ENCODE measurements at regions of chr2 and their contacts with region 1.

Region 1: GRCh38 chr2:231227309-231228162 is 29.1 kb downstream of the ARMC9 start:
- DNase-seq: peak; percentile 90
- H3K27ac ChIP-seq: no peak overlapping the region
- CTCF ChIP-seq: peak; percentile 80

Region 2: DNA sequence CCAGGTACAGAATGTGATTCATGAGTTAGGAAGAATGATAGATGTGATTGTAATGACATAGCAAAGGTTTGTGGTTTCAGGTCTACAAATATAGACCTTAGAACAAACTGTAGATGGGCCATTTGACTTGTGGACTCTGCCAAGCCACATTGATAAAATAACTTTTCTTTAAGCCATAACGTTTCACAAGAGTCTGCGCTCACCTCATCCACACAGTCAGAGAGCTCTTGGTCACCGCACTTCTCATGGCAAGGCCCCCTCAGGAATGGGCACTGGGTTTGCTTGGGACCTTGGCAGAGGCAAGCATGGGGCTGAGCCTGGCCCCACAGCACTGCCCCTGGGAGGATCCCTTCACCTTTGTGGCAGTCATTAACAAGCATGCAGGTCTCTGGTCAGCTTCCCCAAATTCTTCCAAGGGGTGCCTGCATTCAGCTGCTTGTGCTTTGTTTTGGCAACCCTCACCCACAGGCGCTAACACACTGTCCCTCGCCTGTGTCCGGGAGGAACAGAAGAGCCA is 15.1 kb before region 1 on chr2:
- CTCF ChIA-PET with region 1: interaction called, 10 read pairs
- POLR2A ChIA-PET with region 1: no interaction called
- DNase-seq: no peak
- H3K27ac ChIP-seq: no peak overlapping the region
- CTCF ChIP-seq: no peak

Region 3: GRCh38 chr2:231280846-231281245 is 53.3 kb after region 1 on chr2:
- CTCF ChIA-PET with region 1: no interaction called
- POLR2A ChIA-PET with region 1: no interaction called
- DNase-seq: no peak
- H3K27ac ChIP-seq: no peak overlapping the region
- CTCF ChIP-seq: no peak

Region 4: DNA sequence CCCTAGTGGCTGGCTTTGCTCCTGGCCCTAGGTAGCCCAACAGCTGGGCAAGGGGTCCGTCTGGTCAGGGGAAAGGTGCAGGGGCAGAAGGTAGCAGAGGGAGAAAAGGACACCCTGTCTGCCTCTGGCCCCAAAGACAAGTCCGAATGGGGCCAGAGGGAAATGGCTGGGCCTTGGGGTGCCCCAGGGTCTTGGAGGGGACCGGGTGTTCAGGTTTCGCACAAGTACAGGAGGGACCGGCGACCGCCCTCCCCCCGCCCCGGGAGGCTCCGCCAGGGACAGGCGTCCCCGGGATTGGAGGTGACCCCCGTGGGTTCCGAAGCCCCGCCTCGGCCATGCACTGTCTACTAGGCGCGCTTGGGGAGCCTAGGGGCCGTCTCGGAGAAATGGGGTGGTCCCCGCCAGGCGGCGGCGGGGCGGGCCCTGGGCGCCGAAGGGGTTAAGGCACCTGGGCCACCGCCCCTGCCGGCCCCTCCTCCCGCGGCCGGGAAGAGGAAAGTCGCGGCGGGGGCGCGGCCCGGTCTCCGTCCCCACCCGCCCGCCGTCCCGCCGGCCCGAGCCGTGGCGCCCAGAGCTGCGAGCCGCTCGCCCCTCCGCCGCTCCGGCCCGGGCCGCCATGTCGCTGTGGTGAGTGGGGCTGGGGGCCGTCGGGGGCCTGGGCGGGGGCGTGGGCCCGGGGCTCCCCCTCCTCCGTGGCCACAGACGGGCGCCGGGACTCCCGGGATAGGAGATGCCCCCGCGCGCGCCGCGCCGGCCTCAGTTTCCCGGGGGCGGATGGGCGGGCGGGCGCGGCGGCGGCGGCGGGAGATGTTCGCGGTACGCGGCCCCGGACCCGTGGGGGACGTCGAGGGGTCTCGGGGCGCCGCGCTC is 167.9 kb after region 1 on chr2 and contains the start of gene B3GNT7:
- CTCF ChIA-PET with region 1: interaction called, 11 read pairs
- POLR2A ChIA-PET with region 1: no interaction called
- DNase-seq: no peak
- H3K27ac ChIP-seq: no peak within 1 kb of the TSS
- CTCF ChIP-seq: no peak

Region 5: DNA sequence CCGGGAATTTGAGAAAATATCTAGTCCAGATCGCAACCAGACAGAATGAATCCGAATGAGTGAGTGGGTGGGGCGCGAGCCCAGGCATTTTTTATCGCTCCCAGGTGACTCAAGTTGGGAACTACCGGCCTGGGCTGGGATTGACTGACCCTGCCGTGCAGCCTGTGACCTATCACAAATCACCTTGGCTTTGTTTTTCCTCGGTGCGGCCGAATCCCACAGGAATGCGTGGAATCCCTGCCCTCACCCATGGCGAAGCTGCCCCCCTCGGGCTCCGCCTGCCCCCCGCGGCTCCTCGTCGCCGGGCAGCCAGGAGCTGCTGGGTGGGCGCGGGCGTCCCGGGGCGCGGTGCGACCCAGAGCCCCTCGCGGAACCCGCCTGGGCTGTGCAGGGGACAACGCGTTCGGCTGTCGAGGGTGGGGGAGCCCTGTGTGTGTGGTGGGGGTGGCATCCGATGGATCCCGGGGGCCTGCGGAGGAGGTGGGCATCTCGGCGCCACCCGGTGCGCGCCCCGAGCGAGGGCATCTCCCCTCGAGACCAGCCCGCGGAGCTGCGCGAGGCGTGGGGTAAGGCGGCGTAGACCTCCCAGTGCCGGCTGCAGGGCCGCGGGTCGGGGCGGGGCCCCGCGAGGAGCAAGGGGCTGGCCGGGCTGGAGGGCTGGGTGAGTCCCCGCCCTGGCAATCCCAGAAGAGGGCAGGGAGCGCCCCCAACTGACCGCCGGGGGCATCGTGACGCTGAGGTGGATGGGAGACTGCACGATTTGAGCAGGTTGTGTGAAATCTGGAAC is 184.5 kb after region 1 on chr2:
- CTCF ChIA-PET with region 1: interaction called, 27 read pairs
- POLR2A ChIA-PET with region 1: no interaction called
- DNase-seq: peak; percentile 74
- H3K27ac ChIP-seq: peak overlapping the region; percentile 14; the same call in 1 of the 2 replicates
- CTCF ChIP-seq: peak; percentile 91

Region 6: GRCh38 chr2:231452799-231453508 is 225.4 kb after region 1 on chr2:
- CTCF ChIA-PET with region 1: interaction called, 14 read pairs
- POLR2A ChIA-PET with region 1: interaction called, 3 read pairs
- DNase-seq: no peak
- H3K27ac ChIP-seq: peak overlapping the region; percentile 65
- CTCF ChIP-seq: no peak

Measured in RWPE1 (cell line).